Caco-2 (cell line): ENCODE measurements at regions of chr20 and their contacts with region 1.

Region 1: DNA sequence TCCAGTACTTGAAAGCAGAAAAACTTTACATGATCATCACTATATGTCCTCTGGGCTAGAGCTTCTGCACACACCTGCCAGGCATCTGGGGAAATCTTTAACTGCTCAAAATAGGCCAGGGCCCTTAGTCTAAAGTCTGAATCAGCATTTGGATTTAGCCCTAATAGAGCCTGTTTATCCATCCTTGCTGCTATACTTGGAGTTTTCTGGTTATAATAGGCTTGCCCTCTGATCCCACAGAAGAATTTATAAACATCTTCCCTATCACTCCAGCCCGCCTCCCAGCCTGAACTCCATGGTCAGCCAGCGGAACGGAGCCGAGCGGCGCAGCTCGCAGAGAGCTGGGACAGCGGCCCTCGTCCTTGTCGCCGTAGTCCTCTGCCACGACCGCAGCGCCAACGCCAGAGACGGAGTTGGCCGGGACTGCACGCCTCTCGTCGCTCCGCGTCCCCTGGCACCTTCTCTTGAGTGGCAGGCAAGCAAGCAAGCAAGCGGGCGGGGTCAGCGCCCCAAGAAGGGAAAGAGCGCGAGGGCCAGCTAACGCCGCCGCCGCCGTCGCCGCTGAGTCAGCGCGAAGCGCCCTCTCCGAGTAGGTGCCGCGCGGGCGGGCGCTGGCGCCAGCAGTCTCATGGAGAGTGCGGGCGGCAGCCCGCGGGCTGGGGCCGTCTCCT is 25.4 kb upstream of the ASIP start:
- DNase-seq: peak; percentile 90 to 93
- H3K4me3 ChIP-seq: peak overlapping the region; percentile 53
- H3K4me3 Mint-ChIP-seq: no peak overlapping the region
- H3K27ac Mint-ChIP-seq: peak overlapping the region; percentile 71
- H3K4me1 ChIP-seq: no peaks in the 10 kb centered on the region; the same call in 1 of the 2 replicates
- H3K4me1 Mint-ChIP-seq: no peaks in the 10 kb centered on the region
- H3K27me3 ChIP-seq: no peaks in the 10 kb centered on the region; the same call in 1 of the 2 replicates
- H3K27me3 Mint-ChIP-seq: peaks cover 6% of the 10 kb centered on the region
- CTCF ChIP-seq: peak in 1 of 2 experiments; percentile 19

Region 2: GRCh38 chr20:34143951-34144350 is 71.9 kb before region 1 on chr20:
- CTCF ChIA-PET with region 1: no interaction called
- POLR2A ChIA-PET with region 1: no interaction called
- intact Hi-C with region 1: loop called (anchors 2 kb)
- DNase-seq: no peak
- H3K4me3 ChIP-seq: no peak overlapping the region
- H3K4me3 Mint-ChIP-seq: no peak overlapping the region
- H3K27ac Mint-ChIP-seq: no peak overlapping the region
- H3K4me1 ChIP-seq: no peaks in the 10 kb centered on the region
- H3K4me1 Mint-ChIP-seq: no peaks in the 10 kb centered on the region
- H3K27me3 ChIP-seq: no peaks in the 10 kb centered on the region
- H3K27me3 Mint-ChIP-seq: peaks cover 6% of the 10 kb centered on the region
- CTCF ChIP-seq: no peak